Ovary (tissue), 10 donors: ENCODE measurements at regions of chr10 and their contacts with region 1.

Region 1: GRCh38 chr10:73529089-73529832 is 33.4 kb upstream of the PPP3CB start:
- DNase-seq: peak in 4 of 5 donors; percentile 34 to 54 (median 42)
- H3K4me3 ChIP-seq: no peak overlapping the region
- H3K27ac ChIP-seq: no peak overlapping the region
- H3K4me1 ChIP-seq: no peaks in the 10 kb centered on the region
- H3K27me3 ChIP-seq: no peaks in the 10 kb centered on the region
- CTCF ChIP-seq: peak; percentile 80 to 86 (median 86)
- EP300 ChIP-seq: no peak
- POLR2A ChIP-seq: no peak

Region 2: GRCh38 chr10:73644015-73644743 is 114.9 kb after region 1 on chr10:
- intact Hi-C with region 1: loop called (anchors 1 to 2 kb)
- DNase-seq: peak; percentile 50 to 66 (median 53)
- H3K4me3 ChIP-seq: no peak overlapping the region
- H3K27ac ChIP-seq: no peak overlapping the region
- H3K4me1 ChIP-seq: no peaks in the 10 kb centered on the region
- H3K27me3 ChIP-seq: no peaks in the 10 kb centered on the region
- CTCF ChIP-seq: peak; percentile 82 to 89 (median 84)
- EP300 ChIP-seq: no peak
- POLR2A ChIP-seq: no peak